ENCODE measurements at regions of chr4 and their contacts with region 1.

Region 1: GRCh38 chr4:112523764-112524505 is 8.0 kb upstream of the NEUROG2 start:
- DNase-seq: no peak
- ATAC-seq: peak; percentile 65
- H3K4me3 ChIP-seq: peak overlapping the region; percentile 32; the same call in 1 of the 2 replicates
- H3K27ac ChIP-seq: no peak overlapping the region
- H3K4me1 ChIP-seq: no peaks in the 10 kb centered on the region; the same call in 1 of the 2 replicates
- H3K27me3 ChIP-seq: peaks cover 53% of the 10 kb centered on the region
- CTCF ChIP-seq: peak; percentile 57
- POLR2A ChIP-seq: no peak
- RAD21 ChIP-seq: peak; percentile 57

Region 2: GRCh38 chr4:112327965-112328733 is 195.8 kb before region 1 on chr4:
- CTCF ChIA-PET with region 1: interaction called, 15 read pairs
- POLR2A ChIA-PET with region 1: no interaction called
- dilution Hi-C with region 1: no loop called
- in situ Hi-C with region 1: no loop called
- intact Hi-C with region 1: loop called (anchors 1 kb)
- DNase-seq: peak; percentile 72
- ATAC-seq: peak; percentile 83
- H3K4me3 ChIP-seq: no peak overlapping the region
- H3K27ac ChIP-seq: no peak overlapping the region
- H3K4me1 ChIP-seq: no peaks in the 10 kb centered on the region
- H3K27me3 ChIP-seq: no peaks in the 10 kb centered on the region
- CTCF ChIP-seq: peak; percentile 74
- POLR2A ChIP-seq: no peak
- RAD21 ChIP-seq: peak; percentile 83

Region 3: DNA sequence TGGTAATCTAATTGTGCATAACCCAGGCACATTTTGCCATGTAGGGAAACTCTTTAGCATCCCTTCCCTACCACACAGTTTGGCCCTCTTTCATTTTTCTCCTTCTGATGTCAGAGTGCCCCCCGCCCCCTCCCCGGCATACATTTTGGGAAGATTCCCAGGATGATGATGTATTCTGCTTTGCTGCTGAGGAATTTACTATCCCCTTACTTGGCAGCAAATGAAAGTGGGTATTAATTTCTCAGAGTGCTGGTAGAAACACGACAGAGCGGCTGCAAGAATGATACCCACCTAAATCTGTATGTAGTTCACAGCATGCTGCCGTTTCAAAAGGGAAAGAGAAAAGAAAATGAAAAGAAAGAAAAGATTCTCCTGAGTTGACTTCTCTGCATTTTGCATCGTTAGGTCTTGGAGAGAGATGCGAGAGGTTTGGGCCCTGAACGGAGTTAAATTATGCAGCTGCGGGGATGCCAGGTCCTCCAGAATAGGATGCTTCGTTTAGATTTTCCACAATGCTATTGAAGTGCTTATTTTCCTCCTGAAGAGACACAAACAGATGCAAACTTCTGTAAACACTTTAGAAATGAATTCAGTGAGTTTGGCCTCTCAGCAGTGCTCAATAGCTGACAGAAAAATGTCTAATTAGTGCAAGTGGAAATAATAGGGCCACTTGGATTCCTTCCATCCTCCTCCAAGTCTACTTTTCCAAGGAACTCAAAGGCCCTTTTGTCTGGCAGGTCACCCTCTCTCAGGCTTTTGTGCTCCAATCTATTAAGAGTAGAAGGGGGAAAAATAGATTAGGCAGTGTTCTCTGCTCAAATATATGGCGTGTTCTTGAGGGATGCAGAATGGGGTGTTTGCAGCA is 120.6 kb before region 1 on chr4:
- CTCF ChIA-PET with region 1: no interaction called
- POLR2A ChIA-PET with region 1: no interaction called
- dilution Hi-C with region 1: no loop called
- in situ Hi-C with region 1: no loop called
- intact Hi-C with region 1: no loop called
- DNase-seq: peak; percentile 24
- ATAC-seq: peak; percentile 54
- H3K4me3 ChIP-seq: no peak overlapping the region
- H3K27ac ChIP-seq: no peak overlapping the region
- H3K4me1 ChIP-seq: no peaks in the 10 kb centered on the region
- H3K27me3 ChIP-seq: no peaks in the 10 kb centered on the region
- CTCF ChIP-seq: no peak
- POLR2A ChIP-seq: no peak
- RAD21 ChIP-seq: no peak

Region 4: DNA sequence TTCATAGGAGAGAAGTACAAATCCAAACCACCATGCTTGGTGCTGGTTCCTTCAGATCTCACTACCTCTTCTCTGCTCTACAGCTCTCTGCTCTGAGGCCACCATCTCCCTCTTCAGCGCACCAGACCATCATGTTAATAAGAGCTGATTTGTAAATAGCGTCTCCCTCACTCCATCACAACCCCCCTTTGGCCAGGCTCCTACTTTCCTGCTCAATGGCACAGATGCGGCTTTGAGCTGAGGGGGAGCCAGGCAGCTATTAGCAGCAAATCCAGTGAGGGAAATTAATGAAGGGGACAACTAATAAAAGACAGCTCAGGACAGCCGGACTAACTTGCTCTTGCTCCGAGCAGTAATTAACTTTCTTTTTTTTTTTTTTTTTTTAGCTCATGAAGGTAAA is 21.1 kb before region 1 on chr4:
- CTCF ChIA-PET with region 1: no interaction called
- POLR2A ChIA-PET with region 1: interaction called, 18 read pairs
- dilution Hi-C with region 1: no loop called
- in situ Hi-C with region 1: no loop called
- intact Hi-C with region 1: no loop called
- DNase-seq: no peak
- ATAC-seq: no peak
- H3K4me3 ChIP-seq: no peak overlapping the region
- H3K27ac ChIP-seq: no peak overlapping the region
- H3K4me1 ChIP-seq: no peaks in the 10 kb centered on the region
- H3K27me3 ChIP-seq: peaks cover 22% of the 10 kb centered on the region
- CTCF ChIP-seq: no peak
- POLR2A ChIP-seq: no peak
- RAD21 ChIP-seq: no peak

Region 5: GRCh38 chr4:112604589-112604988 is 80.7 kb after region 1 on chr4:
- CTCF ChIA-PET with region 1: interaction called, 3 read pairs
- POLR2A ChIA-PET with region 1: no interaction called
- dilution Hi-C with region 1: no loop called
- in situ Hi-C with region 1: no loop called
- intact Hi-C with region 1: loop called (anchors 1 kb)
- DNase-seq: peak; percentile 65
- ATAC-seq: peak; percentile 99
- H3K4me3 ChIP-seq: no peak overlapping the region
- H3K27ac ChIP-seq: no peak overlapping the region
- H3K4me1 ChIP-seq: no peaks in the 10 kb centered on the region
- H3K27me3 ChIP-seq: no peaks in the 10 kb centered on the region
- CTCF ChIP-seq: peak; percentile 73
- POLR2A ChIP-seq: no peak
- RAD21 ChIP-seq: peak; percentile 80

Region 6: GRCh38 chr4:113474017-113474416 is 950.1 kb after region 1 on chr4:
- CTCF ChIA-PET with region 1: no interaction called
- POLR2A ChIA-PET with region 1: no interaction called
- dilution Hi-C with region 1: no loop called
- in situ Hi-C with region 1: no loop called
- intact Hi-C with region 1: no loop called
- DNase-seq: peak; percentile 82
- ATAC-seq: peak; percentile 45
- H3K4me3 ChIP-seq: no peak overlapping the region
- H3K27ac ChIP-seq: no peak overlapping the region
- H3K4me1 ChIP-seq: peaks cover 2% of the 10 kb centered on the region; the same call in 1 of the 2 replicates
- H3K27me3 ChIP-seq: no peaks in the 10 kb centered on the region
- CTCF ChIP-seq: no peak
- POLR2A ChIP-seq: no peak
- RAD21 ChIP-seq: no peak